ENCODE measurements at regions of chr11 and their contacts with region 1.

Region 1: DNA sequence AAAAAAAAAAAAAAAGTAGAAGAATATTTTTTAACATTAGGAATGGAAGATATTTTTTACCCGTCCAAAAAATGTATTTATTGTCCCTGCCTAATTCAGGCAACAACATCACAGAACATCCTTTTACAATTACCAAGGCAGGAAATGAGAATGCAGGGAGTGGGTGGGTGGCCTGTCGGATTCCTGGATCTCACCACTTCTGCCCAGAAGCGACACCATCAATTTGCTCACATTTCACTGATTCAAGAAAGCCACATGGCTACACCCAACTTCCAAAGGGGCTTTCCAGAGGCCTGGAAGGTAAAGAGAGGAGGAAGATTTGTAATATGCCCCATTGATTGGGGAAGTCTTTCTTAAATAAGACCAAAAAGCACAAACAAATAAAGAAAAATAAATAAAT is 93.8 kb upstream of the CLPB start:
- DNase-seq: no peak
- ATAC-seq: no peak
- H3K4me3 ChIP-seq: no peak overlapping the region
- H3K4me3 Mint-ChIP-seq: no peak overlapping the region
- H3K27ac ChIP-seq: no peak overlapping the region
- H3K27ac Mint-ChIP-seq: no peak overlapping the region
- H3K4me1 ChIP-seq: no peaks in the 10 kb centered on the region
- H3K4me1 Mint-ChIP-seq: peaks cover 0 to 2% (median 0%) of the 10 kb centered on the region in 7 donors
- H3K27me3 ChIP-seq: no peaks in the 10 kb centered on the region
- H3K27me3 Mint-ChIP-seq: peaks cover 0 to 29% (median 3%) of the 10 kb centered on the region in 5 donors

Region 2: DNA sequence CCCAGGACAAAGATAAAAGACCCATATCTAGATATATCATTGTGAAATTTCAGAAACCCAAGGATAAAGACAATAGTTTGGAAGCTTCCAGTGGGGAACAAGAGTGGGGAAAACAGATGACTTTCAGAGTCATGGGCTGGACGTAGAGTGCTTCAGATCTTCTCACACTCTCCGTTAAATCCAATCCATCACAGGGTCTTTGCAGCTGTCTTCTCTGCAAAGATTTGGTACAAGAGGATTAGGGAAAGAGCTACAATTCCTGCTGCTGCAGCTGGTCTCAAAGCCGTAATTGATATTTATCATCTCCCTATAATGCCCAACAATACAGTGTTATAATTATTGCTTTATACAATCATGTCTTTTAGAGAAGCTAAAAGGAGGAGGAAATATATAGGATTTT is 30.4 kb before region 1 on chr11:
- CTCF ChIA-PET with region 1: no interaction called
- POLR2A ChIA-PET with region 1: no interaction called
- intact Hi-C with region 1: loop called in 1 of 2 experiments (anchors 1 kb)
- DNase-seq: no peak
- ATAC-seq: no peak
- H3K4me3 ChIP-seq: no peak overlapping the region
- H3K4me3 Mint-ChIP-seq: no peak overlapping the region
- H3K27ac ChIP-seq: no peak overlapping the region
- H3K27ac Mint-ChIP-seq: no peak overlapping the region
- H3K4me1 ChIP-seq: no peaks in the 10 kb centered on the region
- H3K4me1 Mint-ChIP-seq: peaks cover 4 to 15% (median 13%) of the 10 kb centered on the region in 7 donors
- H3K27me3 ChIP-seq: no peaks in the 10 kb centered on the region
- H3K27me3 Mint-ChIP-seq: peaks cover 0 to 4% (median 0%) of the 10 kb centered on the region in 5 donors

Region 3: DNA sequence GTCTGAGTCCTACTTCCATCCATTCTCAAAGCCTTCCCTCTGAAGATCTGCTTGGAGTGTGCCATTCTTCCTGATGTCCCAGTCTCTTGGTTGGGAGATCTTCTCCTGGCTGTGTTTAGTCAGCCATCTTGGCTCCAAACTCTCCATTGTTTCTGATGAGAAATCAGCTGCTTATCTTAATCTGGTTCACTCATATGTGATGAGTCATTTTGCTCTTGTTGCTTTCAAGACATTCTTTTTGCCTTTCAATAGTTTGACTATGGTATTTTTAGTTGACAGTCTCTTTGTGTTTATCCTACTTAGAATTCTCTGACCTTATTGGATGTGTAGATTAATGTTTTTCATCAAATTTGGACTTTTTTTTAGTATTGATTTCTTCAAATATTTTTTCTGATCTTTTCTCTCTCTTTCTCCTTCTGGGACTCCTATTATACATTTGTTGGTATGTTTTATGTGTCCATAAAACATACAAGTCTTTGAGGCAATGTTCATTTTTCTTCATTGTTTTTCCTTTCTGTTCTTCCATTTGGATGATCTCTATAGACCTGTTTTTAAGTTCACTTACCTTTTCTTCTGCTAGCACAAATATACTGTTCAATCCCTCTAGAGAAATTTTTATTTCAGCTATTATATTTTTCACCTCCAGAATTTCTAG is 16.6 kb before region 1 on chr11:
- CTCF ChIA-PET with region 1: no interaction called
- POLR2A ChIA-PET with region 1: no interaction called
- intact Hi-C with region 1: no loop called
- DNase-seq: no peak
- ATAC-seq: no peak
- H3K4me3 ChIP-seq: no peak overlapping the region
- H3K4me3 Mint-ChIP-seq: no peak overlapping the region
- H3K27ac ChIP-seq: no peak overlapping the region
- H3K27ac Mint-ChIP-seq: peak overlapping the region in 1 of 9 donors; percentile 21
- H3K4me1 ChIP-seq: no peaks in the 10 kb centered on the region
- H3K4me1 Mint-ChIP-seq: no peaks in the 10 kb centered on the region
- H3K27me3 ChIP-seq: no peaks in the 10 kb centered on the region
- H3K27me3 Mint-ChIP-seq: peaks cover 0 to 12% (median 3%) of the 10 kb centered on the region in 5 donors

Measured in naive thymus-derived CD4-positive, alpha-beta T cell (primary cell).